Activated T-helper 1 cell treated with anti-CD3 and anti-CD28 coated beads, Interleukin-12 subunit alpha, Interleukin-12 subunit beta, Interleukin-2, Interleukin-4 antibody, amounts not matched to agents 30 ng/mL and 10 ng/mL and 1 ng/mL, durations not matched to agents 14 hours and 24 hours and 36 hours (primary cell): ENCODE measurements at regions of chr2 and their contacts with region 1.

Region 1: GRCh38 chr2:196068271-196069209 is at the start of gene DNAH7:
- DNase-seq: peak; percentile 88
- H3K4me3 Mint-ChIP-seq: peak within 1 kb of the TSS; percentile 87
- H3K27ac Mint-ChIP-seq: peak within 1 kb of the TSS; percentile 89
- H3K4me1 Mint-ChIP-seq: peaks cover 15% of the 10 kb centered on the region
- H3K27me3 Mint-ChIP-seq: peaks cover 32% of the 10 kb centered on the region
- total RNA-seq, gene DNAH7: not detected in 2 replicates

Region 2: DNA sequence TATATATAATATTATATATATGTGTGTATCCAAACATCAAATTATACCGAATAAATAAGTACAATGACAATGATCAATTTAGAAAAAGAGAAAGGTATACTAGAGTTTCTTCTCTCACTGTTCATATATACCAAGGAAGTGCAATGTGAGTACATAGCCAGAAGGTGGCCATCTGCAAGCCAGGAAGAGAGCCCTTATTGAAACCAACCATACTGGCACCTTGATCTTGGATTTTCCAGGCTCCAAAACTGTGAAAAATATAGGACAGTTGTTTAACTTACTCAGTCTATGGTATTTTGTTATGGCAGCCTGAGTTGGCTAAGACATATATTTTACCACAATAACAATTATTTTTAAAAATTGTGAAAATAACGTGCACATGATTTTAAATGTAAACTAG is 1901.7 kb before region 1 on chr2:
- intact Hi-C with region 1: loop called (anchors 1 kb)
- DNase-seq: no peak
- H3K4me3 Mint-ChIP-seq: no peak overlapping the region
- H3K27ac Mint-ChIP-seq: no peak overlapping the region
- H3K4me1 Mint-ChIP-seq: no peaks in the 10 kb centered on the region
- H3K27me3 Mint-ChIP-seq: no peaks in the 10 kb centered on the region

Region 3: DNA sequence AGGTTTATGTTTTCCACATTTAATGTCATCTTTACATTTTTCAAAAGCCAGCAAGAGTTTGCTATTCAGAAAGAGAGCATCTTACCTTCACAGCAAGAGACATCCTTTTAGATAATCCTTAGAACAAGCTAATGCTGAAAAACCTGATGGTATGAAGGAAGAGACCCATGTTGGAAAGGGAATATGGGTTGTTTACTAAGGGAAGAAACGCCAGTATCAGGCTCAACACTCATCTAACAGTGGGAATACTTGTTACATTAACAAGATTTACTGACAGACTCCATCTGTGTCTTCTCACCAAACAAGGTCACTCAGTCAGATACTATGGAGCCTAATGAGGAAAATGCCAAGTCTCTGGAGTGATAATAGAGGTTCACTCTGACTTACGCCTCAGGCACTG is 1885.7 kb before region 1 on chr2:
- intact Hi-C with region 1: no loop called
- DNase-seq: no peak
- H3K4me3 Mint-ChIP-seq: no peak overlapping the region
- H3K27ac Mint-ChIP-seq: no peak overlapping the region
- H3K4me1 Mint-ChIP-seq: no peaks in the 10 kb centered on the region
- H3K27me3 Mint-ChIP-seq: no peaks in the 10 kb centered on the region

Region 4: GRCh38 chr2:194545978-194546377 is 1522.6 kb before region 1 on chr2:
- intact Hi-C with region 1: loop called (anchors 5 kb)
- DNase-seq: no peak
- H3K4me3 Mint-ChIP-seq: no peak overlapping the region
- H3K27ac Mint-ChIP-seq: no peak overlapping the region
- H3K4me1 Mint-ChIP-seq: no peaks in the 10 kb centered on the region
- H3K27me3 Mint-ChIP-seq: no peaks in the 10 kb centered on the region

Region 5: GRCh38 chr2:195533771-195534642 is 534.5 kb before region 1 on chr2:
- intact Hi-C with region 1: loop called (anchors 5 kb)
- DNase-seq: peak; percentile 60
- H3K4me3 Mint-ChIP-seq: peak overlapping the region; percentile 82
- H3K27ac Mint-ChIP-seq: peak overlapping the region; percentile 96
- H3K4me1 Mint-ChIP-seq: peaks cover 86% of the 10 kb centered on the region
- H3K27me3 Mint-ChIP-seq: no peaks in the 10 kb centered on the region

Region 6: GRCh38 chr2:196337208-196337953 is 268.8 kb after region 1 on chr2:
- intact Hi-C with region 1: loop called (anchors 2 kb)
- DNase-seq: no peak
- H3K4me3 Mint-ChIP-seq: no peak overlapping the region
- H3K27ac Mint-ChIP-seq: no peak overlapping the region
- H3K4me1 Mint-ChIP-seq: no peaks in the 10 kb centered on the region
- H3K27me3 Mint-ChIP-seq: peaks cover 10% of the 10 kb centered on the region

Region 7: GRCh38 chr2:197453161-197453914 is 1384.8 kb after region 1 on chr2 and contains the start of gene COQ10B:
- intact Hi-C with region 1: loop called (anchors 5 kb)
- DNase-seq: peak; percentile 99
- H3K4me3 Mint-ChIP-seq: peak within 1 kb of the TSS; percentile 99
- H3K27ac Mint-ChIP-seq: peak within 1 kb of the TSS; percentile 100
- H3K4me1 Mint-ChIP-seq: peaks cover 40% of the 10 kb centered on the region
- H3K27me3 Mint-ChIP-seq: no peaks in the 10 kb centered on the region
- total RNA-seq, gene COQ10B: 26.9 and 28.8 TPM in 2 replicates